B cell (primary cell): ENCODE measurements at regions of chr3 and their contacts with region 1.

Region 1: GRCh38 chr3:50587806-50588758 is 18.8 kb downstream of the HEMK1 start:
- DNase-seq: no peak
- ATAC-seq: no peak
- H3K4me3 ChIP-seq: no peak overlapping the region
- H3K4me3 Mint-ChIP-seq: no peak overlapping the region
- H3K27ac ChIP-seq: no peak overlapping the region
- H3K27ac Mint-ChIP-seq: peak overlapping the region; percentile 67
- H3K4me1 ChIP-seq: peaks cover 18 to 43% of the 10 kb centered on the region in 2 donors
- H3K4me1 Mint-ChIP-seq: peaks cover 29% of the 10 kb centered on the region
- H3K27me3 ChIP-seq: no peaks in the 10 kb centered on the region
- H3K27me3 Mint-ChIP-seq: no peaks in the 10 kb centered on the region
- CTCF ChIP-seq: no peak

Region 2: GRCh38 chr3:50600841-50601591 is 12.9 kb after region 1 on chr3:
- CTCF ChIA-PET with region 1: interaction called, 6 read pairs
- POLR2A ChIA-PET with region 1: interaction called, 3 read pairs
- intact Hi-C with region 1: loop called (anchors 1 kb)
- DNase-seq: peak; percentile 50
- ATAC-seq: peak; percentile 59
- H3K4me3 ChIP-seq: no peak overlapping the region
- H3K4me3 Mint-ChIP-seq: peak overlapping the region; percentile 32
- H3K27ac ChIP-seq: peak overlapping the region in 1 of 2 donors; percentile 44
- H3K27ac Mint-ChIP-seq: peak overlapping the region; percentile 74
- H3K4me1 ChIP-seq: peaks cover 37 to 46% of the 10 kb centered on the region in 2 donors
- H3K4me1 Mint-ChIP-seq: peaks cover 40% of the 10 kb centered on the region
- H3K27me3 ChIP-seq: no peaks in the 10 kb centered on the region
- H3K27me3 Mint-ChIP-seq: no peaks in the 10 kb centered on the region
- CTCF ChIP-seq: no peak

Region 3: DNA sequence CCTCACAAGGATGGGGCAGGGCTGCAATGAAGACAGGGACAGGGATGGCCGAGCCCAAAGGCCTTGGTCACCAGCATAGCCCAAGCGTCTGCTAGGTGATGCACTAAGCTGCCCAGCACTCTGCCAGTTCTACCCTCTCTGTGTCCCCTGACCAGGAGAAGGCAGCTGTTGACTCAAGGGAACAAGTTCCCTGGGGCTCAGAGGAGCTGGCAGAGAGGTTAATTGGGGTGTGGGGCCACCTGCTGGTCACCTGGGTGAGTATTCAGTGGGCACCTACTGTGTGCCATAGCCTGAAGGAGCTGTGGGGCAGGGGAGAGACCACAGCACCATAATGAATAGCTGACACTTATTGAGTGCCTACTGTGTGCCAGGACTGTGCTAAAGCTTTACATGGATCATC is 64.6 kb after region 1 on chr3:
- CTCF ChIA-PET with region 1: interaction called, 16 read pairs
- POLR2A ChIA-PET with region 1: no interaction called
- intact Hi-C with region 1: no loop called
- DNase-seq: peak; percentile 56
- ATAC-seq: peak; percentile 68
- H3K4me3 ChIP-seq: no peak overlapping the region
- H3K4me3 Mint-ChIP-seq: no peak overlapping the region
- H3K27ac ChIP-seq: no peak overlapping the region
- H3K27ac Mint-ChIP-seq: no peak overlapping the region
- H3K4me1 ChIP-seq: no peaks in the 10 kb centered on the region
- H3K4me1 Mint-ChIP-seq: no peaks in the 10 kb centered on the region
- H3K27me3 ChIP-seq: no peaks in the 10 kb centered on the region
- H3K27me3 Mint-ChIP-seq: no peaks in the 10 kb centered on the region
- CTCF ChIP-seq: peak; percentile 27